Activated CD4-positive, alpha-beta memory T cell treated with anti-CD3 and anti-CD28 coated beads for 36 hours (primary cell): ENCODE measurements at regions of chr20 and their contacts with region 1.

Region 1: DNA sequence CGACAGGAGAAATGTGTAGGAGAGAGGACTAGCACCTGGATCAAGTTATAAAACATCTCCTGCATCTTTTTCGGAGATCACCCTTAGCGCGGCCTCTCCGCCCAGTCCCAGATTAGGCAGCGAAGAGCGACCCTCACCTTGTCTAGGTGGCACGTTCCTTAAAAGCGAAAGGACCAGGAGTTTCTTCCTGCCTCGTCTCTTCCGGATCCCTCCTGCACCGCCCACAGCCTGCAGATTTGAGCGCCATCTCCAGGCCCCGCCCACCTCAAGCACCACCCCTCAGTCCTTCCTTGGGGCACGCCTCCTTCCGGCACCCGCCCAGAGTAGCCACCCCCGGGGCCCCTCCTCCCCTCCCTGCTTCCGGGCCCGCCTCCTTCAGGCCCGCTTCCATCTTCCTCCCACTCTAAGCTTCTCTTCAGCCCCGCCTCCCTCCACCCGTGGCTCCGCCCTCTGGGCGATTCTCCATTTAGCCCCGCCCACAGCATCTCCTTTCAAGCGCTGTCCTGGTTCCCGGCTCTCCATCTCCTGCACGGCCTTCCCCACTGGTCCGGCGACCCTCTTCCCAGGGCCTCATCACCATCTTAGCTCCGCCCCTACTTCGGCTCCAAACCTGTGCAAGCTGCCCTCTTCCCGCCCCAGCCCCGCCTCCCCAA is 662 bp upstream of the RALY start:
- DNase-seq: peak; percentile 100
- H3K4me3 Mint-ChIP-seq: peak overlapping the region; percentile 91
- H3K27ac Mint-ChIP-seq: peak overlapping the region; percentile 98
- H3K4me1 Mint-ChIP-seq: peaks cover 55% of the 10 kb centered on the region
- H3K27me3 Mint-ChIP-seq: no peaks in the 10 kb centered on the region

Region 2: GRCh38 chr20:33674295-33675135 is 318.5 kb before region 1 on chr20 and contains the start of gene NECAB3:
- CTCF ChIA-PET with region 1: no interaction called
- POLR2A ChIA-PET with region 1: no interaction called
- intact Hi-C with region 1: no loop called
- DNase-seq: peak; percentile 73
- H3K4me3 Mint-ChIP-seq: peak within 1 kb of the TSS; percentile 76
- H3K27ac Mint-ChIP-seq: peak within 1 kb of the TSS; percentile 49
- H3K4me1 Mint-ChIP-seq: peaks cover 39% of the 10 kb centered on the region
- H3K27me3 Mint-ChIP-seq: no peaks in the 10 kb centered on the region
- total RNA-seq, gene NECAB3: 21.0 to 22.7 TPM

Region 3: DNA sequence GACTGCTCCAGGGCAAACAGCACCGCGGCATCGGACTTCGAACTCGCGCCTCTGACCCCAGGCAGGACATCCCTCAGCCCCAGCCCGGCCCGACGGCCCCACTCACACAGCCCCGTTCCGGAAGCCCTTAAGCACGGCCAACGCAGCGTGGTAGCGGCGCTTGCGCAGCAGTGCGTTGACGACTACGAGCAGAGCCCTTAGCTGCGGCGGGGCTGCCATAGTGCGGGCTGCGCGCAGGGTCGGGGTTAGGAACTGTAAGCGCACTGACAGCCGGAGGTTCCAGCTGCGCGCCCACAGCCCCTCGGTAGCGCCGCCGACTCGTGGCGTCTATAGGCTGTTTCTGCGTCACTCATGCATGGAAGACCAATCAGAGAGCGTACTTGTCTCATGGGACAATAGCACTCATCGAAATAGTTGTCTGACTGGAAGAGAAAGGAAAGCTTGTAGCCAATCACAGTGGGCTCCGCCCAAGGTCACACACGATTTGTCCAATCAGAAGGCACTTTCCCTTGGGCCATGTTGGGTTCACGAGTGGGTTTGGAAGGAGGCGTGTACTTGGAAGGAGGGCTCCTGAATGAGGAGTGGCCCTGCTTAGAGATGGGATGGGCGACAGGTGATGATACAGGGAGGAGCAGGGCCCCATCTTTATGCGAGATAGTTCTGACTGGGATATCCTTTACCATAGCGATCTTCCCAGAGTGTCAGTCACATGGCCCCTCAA is 272.9 kb before region 1 on chr20 and contains the start of gene PXMP4:
- CTCF ChIA-PET with region 1: no interaction called
- POLR2A ChIA-PET with region 1: interaction called, 4 read pairs
- intact Hi-C with region 1: loop called (anchors 1 kb)
- DNase-seq: peak; percentile 95
- H3K4me3 Mint-ChIP-seq: peak within 1 kb of the TSS; percentile 95
- H3K27ac Mint-ChIP-seq: peak within 1 kb of the TSS; percentile 75
- H3K4me1 Mint-ChIP-seq: peaks cover 23% of the 10 kb centered on the region
- H3K27me3 Mint-ChIP-seq: no peaks in the 10 kb centered on the region
- total RNA-seq, gene PXMP4: 8.7 to 11.6 TPM

Region 4: GRCh38 chr20:33810885-33811777 is 181.9 kb before region 1 on chr20 and contains the start of gene CHMP4B:
- CTCF ChIA-PET with region 1: no interaction called
- POLR2A ChIA-PET with region 1: interaction called, 6 read pairs
- intact Hi-C with region 1: loop called (anchors 1 kb)
- DNase-seq: peak; percentile 99
- H3K4me3 Mint-ChIP-seq: peak within 1 kb of the TSS; percentile 98
- H3K27ac Mint-ChIP-seq: peak within 1 kb of the TSS; percentile 91
- H3K4me1 Mint-ChIP-seq: peaks cover 40% of the 10 kb centered on the region
- H3K27me3 Mint-ChIP-seq: no peaks in the 10 kb centered on the region
- total RNA-seq, gene CHMP4B: 93.9 to 94.8 TPM

Region 5: DNA sequence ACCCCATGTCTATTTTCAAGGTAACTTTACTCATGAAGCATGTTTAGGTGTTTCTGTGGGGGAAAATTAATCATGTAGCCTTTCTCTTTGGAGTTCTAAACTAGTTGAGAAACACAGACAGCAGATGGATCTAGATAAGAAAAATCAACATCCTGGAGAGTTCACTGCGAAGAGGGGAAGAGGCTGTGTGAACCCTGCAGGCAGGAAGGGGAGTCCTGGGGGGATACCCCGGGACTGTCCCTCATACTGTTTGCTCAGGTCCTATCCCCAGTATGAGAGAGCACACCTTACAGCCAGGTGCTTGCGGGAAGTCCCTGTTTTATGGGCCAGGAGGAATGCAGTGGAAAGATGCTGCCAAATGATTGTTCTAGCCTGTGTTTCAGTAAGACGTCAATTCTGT is 149.2 kb before region 1 on chr20:
- CTCF ChIA-PET with region 1: no interaction called
- POLR2A ChIA-PET with region 1: no interaction called
- intact Hi-C with region 1: no loop called
- DNase-seq: peak; percentile 49
- H3K4me3 Mint-ChIP-seq: no peak overlapping the region
- H3K27ac Mint-ChIP-seq: peak overlapping the region; percentile 4
- H3K4me1 Mint-ChIP-seq: peaks cover 74% of the 10 kb centered on the region
- H3K27me3 Mint-ChIP-seq: no peaks in the 10 kb centered on the region

Region 6: DNA sequence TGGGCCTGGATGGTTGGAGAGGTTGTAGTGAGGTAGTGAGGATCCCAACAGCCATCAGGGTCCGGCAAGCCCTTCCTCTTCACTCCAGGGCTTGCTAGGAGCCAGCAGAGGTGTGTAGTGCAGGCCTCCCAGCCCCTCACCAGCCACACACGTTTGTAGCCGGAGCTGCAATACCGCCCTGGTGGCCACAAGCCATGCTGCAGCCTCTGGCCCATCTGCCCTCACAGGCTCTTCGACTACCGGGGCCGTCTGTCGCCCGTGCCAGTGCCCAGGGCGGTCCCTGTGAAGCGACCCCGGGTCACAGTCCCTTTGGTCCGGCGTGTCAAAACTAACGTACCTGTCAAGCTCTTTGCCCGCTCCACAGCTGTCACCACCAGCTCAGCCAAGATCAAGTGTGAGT is 82.6 kb after region 1 on chr20:
- CTCF ChIA-PET with region 1: no interaction called
- POLR2A ChIA-PET with region 1: no interaction called
- intact Hi-C with region 1: no loop called
- DNase-seq: no peak
- H3K4me3 Mint-ChIP-seq: no peak overlapping the region
- H3K27ac Mint-ChIP-seq: no peak overlapping the region
- H3K4me1 Mint-ChIP-seq: peaks cover 14% of the 10 kb centered on the region
- H3K27me3 Mint-ChIP-seq: no peaks in the 10 kb centered on the region

Region 7: DNA sequence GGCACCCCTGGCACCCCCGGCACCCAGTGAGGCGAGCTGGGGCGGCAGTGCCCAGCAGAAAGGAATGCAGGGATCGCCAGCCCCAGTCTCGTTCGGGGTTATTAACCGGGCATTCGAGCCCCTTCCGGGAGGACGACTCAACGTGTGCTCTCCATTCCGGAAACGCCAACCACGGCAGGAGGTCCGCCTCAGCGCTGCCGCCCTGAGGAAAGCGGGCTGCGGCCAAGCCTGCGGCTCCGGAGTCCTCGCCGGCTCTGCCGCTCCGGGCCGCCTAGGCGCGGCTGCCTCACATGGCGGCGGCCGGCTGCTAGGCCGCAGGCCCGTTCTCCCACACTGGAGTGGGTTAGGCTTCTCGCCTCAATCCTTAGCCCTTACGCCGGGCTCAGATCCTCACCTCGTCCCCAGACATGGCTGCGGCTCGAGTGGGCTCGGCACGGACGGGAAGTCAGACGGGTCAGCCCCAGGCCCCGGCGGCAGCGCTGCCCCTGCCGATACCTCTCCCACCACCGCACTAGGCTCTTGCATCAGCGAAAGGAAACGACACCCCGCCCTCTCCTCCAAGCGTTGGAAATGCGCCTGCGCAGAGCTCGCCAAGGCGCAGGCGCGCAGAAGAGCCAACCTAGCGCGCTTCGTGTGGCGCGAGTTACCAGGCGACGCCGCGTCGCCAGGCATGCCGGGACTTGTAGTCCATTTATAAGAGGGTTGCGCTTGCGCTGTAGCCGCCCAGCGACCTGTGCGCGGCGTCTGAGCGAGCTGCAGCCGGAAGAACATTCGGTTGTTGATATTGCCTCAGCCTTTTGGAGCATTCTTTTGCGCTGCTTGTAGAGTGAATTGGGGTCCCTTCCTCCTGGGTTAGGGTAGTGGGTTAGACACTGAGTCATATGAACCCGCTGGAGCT is 118.9 kb after region 1 on chr20 and contains the start of gene EIF2S2:
- CTCF ChIA-PET with region 1: no interaction called
- POLR2A ChIA-PET with region 1: interaction called, 21 read pairs
- intact Hi-C with region 1: loop called (anchors 1 kb)
- DNase-seq: peak; percentile 97
- H3K4me3 Mint-ChIP-seq: peak within 1 kb of the TSS; percentile 97
- H3K27ac Mint-ChIP-seq: peak within 1 kb of the TSS; percentile 98
- H3K4me1 Mint-ChIP-seq: peaks cover 41% of the 10 kb centered on the region
- H3K27me3 Mint-ChIP-seq: no peaks in the 10 kb centered on the region
- total RNA-seq, gene EIF2S2: 151 to 155 TPM

Region 8: DNA sequence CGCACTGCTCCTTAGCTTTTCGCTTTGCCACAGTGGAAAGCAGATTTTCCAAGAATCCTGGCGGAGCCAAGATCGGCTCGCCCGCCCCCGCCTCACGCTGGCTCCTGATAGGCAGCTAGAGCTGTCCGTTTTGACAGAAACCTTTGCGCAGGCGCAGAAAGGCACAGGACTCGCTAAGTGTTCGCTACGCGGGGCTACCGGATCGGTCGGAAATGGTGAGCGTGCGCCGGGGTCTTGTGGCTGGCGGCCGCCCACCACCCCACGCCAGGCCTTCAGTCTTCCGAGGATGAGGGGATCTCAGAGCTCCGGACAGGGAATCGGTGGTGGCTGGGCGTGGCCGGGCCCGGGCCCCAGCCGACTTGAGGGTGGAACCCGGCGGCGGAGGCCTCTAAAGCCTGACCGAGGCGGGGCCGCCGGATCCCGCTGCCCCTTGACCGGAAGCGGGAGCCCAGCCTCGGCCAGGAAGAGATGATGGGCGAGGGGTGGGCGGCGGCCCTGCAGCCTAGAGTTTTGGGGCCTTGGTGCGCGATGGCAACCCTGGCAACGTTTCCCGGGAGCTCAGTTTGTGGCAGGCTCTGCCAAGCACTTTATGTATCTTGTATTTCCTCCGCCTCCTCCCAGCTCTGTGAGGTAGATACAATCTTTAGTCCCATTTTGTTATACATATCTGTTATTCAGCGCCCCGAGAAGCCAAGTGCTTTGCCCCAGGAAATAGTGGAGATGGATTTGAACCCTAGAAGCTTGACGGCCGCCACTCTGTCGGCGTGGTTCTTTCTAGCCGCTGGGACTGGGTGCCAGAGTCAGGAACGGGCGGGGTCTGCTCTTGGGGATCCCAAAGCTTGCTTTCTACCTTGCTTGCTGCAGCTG is 523.4 kb after region 1 on chr20 and contains the start of gene DYNLRB1:
- CTCF ChIA-PET with region 1: no interaction called
- POLR2A ChIA-PET with region 1: no interaction called
- intact Hi-C with region 1: loop called (anchors 10 kb)
- DNase-seq: peak; percentile 96
- H3K4me3 Mint-ChIP-seq: peak within 1 kb of the TSS; percentile 98
- H3K27ac Mint-ChIP-seq: peak within 1 kb of the TSS; percentile 92
- H3K4me1 Mint-ChIP-seq: peaks cover 34% of the 10 kb centered on the region
- H3K27me3 Mint-ChIP-seq: no peaks in the 10 kb centered on the region
- total RNA-seq, gene DYNLRB1: 101 to 108 TPM

Region 9: GRCh38 chr20:34621383-34622367 is 628.6 kb after region 1 on chr20:
- CTCF ChIA-PET with region 1: no interaction called
- POLR2A ChIA-PET with region 1: no interaction called
- intact Hi-C with region 1: no loop called
- DNase-seq: no peak
- H3K4me3 Mint-ChIP-seq: no peak overlapping the region
- H3K27ac Mint-ChIP-seq: no peak overlapping the region
- H3K4me1 Mint-ChIP-seq: peaks cover 16% of the 10 kb centered on the region
- H3K27me3 Mint-ChIP-seq: no peaks in the 10 kb centered on the region